ENCODE measurements at regions of chr19 and their contacts with region 1.

Region 1: DNA sequence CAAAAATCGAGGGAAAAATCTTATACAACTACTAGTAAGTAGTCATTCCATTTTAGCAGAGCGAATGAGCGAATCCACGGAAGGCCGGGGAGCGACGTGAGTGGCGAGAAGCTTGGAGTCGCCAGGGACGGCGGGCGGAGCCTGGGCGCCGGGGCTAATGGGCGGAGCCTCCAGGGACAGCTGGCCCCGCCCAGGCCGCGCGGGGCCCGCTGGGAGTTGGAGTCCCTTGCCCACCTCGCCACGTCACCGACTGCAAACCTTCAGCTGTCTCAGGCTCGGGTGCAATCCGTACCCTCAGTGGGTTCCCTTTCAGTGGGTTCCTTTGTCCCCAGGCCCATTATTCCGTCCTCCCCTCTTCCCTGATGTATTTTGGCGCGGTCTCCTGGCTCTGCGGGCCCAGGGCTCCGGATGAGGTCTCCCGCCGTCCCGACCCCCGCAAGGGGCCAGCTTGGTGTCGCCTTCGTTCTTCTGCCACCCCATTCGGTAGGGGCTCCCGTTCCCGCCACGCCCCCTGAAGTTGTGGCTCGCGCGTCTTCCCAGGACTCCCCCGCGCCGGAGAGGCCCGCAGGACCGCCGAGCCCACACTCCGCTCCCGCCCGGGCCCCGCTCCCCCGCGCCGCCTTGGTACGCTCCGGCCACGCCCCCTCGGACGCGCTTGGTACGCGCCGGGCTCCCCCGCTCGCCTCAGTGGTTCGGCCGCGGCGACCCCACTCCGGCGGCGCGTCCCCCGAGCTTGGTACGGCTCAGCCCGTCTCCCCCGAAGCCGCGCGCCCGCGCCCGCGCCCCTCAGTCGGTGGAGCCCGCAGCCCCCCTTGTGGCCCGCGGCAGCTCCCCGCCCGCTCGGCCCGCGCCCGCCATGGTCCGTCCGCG is at the start of gene PTOV1:
- DNase-seq: peak; percentile 92 to 96 (median 93)
- ATAC-seq: peak; percentile 94 to 97 (median 94)
- H3K4me3 ChIP-seq: peak within 1 kb of the TSS; percentile 60 to 99 (median 76)
- H3K27ac ChIP-seq: peak within 1 kb of the TSS; percentile 93 to 100 (median 99)
- H3K4me1 ChIP-seq: peaks cover 3 to 42% (median 25%) of the 10 kb centered on the region in 12 donors
- H3K27me3 ChIP-seq: no peaks in the 10 kb centered on the region
- CTCF ChIP-seq: no peak
- POLR2A ChIP-seq: peak; percentile 29 to 86
- total RNA-seq, gene PTOV1: 70.9 to 109 (median 91.5) TPM

Region 2: DNA sequence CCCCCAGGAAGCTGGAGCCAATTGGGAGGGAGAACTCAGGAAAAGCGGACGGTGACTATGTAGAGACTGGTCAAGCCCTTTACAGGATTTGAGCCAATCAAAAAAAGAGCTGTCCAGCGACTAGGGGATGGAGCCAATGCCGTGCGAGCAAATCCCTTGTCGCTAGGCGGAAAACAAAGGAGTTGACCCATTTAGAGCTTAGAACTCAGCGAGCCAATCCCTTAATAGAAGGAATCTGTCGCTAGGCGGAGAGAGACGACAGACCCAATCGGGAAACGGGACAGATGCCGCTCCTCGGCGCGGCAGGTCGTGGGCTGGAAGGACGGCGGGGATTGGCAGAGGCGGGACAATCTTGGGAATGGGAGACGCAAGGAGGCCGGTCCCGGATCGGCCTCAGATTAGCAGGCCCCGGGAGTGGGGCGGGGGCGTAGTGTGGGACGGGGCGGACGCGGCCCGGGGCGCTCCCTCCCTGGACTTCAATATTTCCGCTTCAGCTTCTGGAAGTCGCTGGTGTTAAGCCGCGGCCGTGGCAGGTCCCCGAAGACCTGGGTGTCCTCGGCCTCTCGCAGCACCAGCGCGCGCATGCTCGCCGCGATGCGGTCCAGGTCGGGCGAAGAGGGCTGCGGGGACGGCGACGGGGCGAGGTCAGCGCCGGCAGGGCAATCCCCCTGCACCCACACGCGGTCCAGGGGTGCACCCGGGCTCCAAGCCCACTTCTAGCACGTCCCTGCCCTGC is 18.9 kb after region 1 on chr19:
- intact Hi-C with region 1: loop called in 1 of 10 experiments (anchors 2 kb)
- DNase-seq: peak; percentile 97
- ATAC-seq: peak; percentile 80 to 91 (median 86)
- H3K4me3 ChIP-seq: peak overlapping the region; percentile 36 to 79 (median 60)
- H3K27ac ChIP-seq: peak overlapping the region; percentile 83 to 98 (median 94)
- H3K4me1 ChIP-seq: peaks cover 9 to 58% (median 43%) of the 10 kb centered on the region in 12 donors
- H3K27me3 ChIP-seq: no peaks in the 10 kb centered on the region
- CTCF ChIP-seq: peak in 2 of 12 donors; percentile 12 to 33
- POLR2A ChIP-seq: peak; percentile 77 to 91